ENCODE measurements at regions of chr7 and their contacts with region 1.

Region 1: GRCh38 chr7:38178004-38178694 is at the start of gene STARD3NL:
- DNase-seq: peak; percentile 64 to 100 (median 87)
- ATAC-seq: peak; percentile 94
- H3K4me3 ChIP-seq: peak within 1 kb of the TSS; percentile 72 to 93
- H3K4me3 Mint-ChIP-seq: peak within 1 kb of the TSS; percentile 96
- H3K27ac ChIP-seq: peak within 1 kb of the TSS; percentile 78 to 93
- H3K27ac Mint-ChIP-seq: peak within 1 kb of the TSS; percentile 96
- H3K4me1 ChIP-seq: peaks cover 24% of the 10 kb centered on the region
- H3K4me1 Mint-ChIP-seq: peaks cover 38% of the 10 kb centered on the region
- H3K27me3 ChIP-seq: no peaks in the 10 kb centered on the region
- H3K27me3 Mint-ChIP-seq: peaks cover 11% of the 10 kb centered on the region
- CTCF ChIP-seq: no peak
- total RNA-seq, gene STARD3NL: 22.4 to 22.7 TPM

Region 2: GRCh38 chr7:38020121-38020785 is 157.9 kb before region 1 on chr7:
- CTCF ChIA-PET with region 1: no interaction called
- POLR2A ChIA-PET with region 1: no interaction called
- intact Hi-C with region 1: no loop called
- DNase-seq: no peak
- ATAC-seq: no peak
- H3K4me3 ChIP-seq: no peak overlapping the region
- H3K4me3 Mint-ChIP-seq: no peak overlapping the region
- H3K27ac ChIP-seq: no peak overlapping the region
- H3K27ac Mint-ChIP-seq: no peak overlapping the region
- H3K4me1 ChIP-seq: no peaks in the 10 kb centered on the region
- H3K4me1 Mint-ChIP-seq: no peaks in the 10 kb centered on the region
- H3K27me3 ChIP-seq: no peaks in the 10 kb centered on the region
- H3K27me3 Mint-ChIP-seq: peaks cover 12% of the 10 kb centered on the region
- CTCF ChIP-seq: no peak

Region 3: GRCh38 chr7:38360776-38361175 is 182.6 kb after region 1 on chr7:
- CTCF ChIA-PET with region 1: no interaction called
- POLR2A ChIA-PET with region 1: no interaction called
- intact Hi-C with region 1: loop called (anchors 5 kb)
- DNase-seq: no peak
- ATAC-seq: no peak
- H3K4me3 ChIP-seq: peak overlapping the region; percentile 63 to 65
- H3K4me3 Mint-ChIP-seq: peak overlapping the region; percentile 91
- H3K27ac ChIP-seq: peak overlapping the region in 1 of 2 experiments; percentile 14
- H3K27ac Mint-ChIP-seq: peak overlapping the region; percentile 94
- H3K4me1 ChIP-seq: peaks cover 19% of the 10 kb centered on the region
- H3K4me1 Mint-ChIP-seq: peaks cover 72% of the 10 kb centered on the region
- H3K27me3 ChIP-seq: no peaks in the 10 kb centered on the region
- H3K27me3 Mint-ChIP-seq: no peaks in the 10 kb centered on the region
- CTCF ChIP-seq: no peak

Measured in CD8-positive, alpha-beta T cell (primary cell).